Activated B cell treated with CpG ODN at 0.5 μM for 24 hours (primary cell): ENCODE measurements at regions of chr17 and their contacts with region 1.

Region 1: GRCh38 chr17:45317112-45317928 is 500 bp upstream of the MAP3K14 start:
- DNase-seq: peak; percentile 99
- ATAC-seq: peak; percentile 79
- H3K4me3 Mint-ChIP-seq: peak overlapping the region; percentile 90
- H3K27ac Mint-ChIP-seq: peak overlapping the region; percentile 96
- H3K4me1 Mint-ChIP-seq: peaks cover 49% of the 10 kb centered on the region
- H3K27me3 Mint-ChIP-seq: no peaks in the 10 kb centered on the region
- CTCF ChIP-seq: no peak

Region 2: GRCh38 chr17:44988044-44988942 is 329.0 kb before region 1 on chr17:
- CTCF ChIA-PET with region 1: no interaction called
- POLR2A ChIA-PET with region 1: no interaction called
- intact Hi-C with region 1: no loop called
- DNase-seq: no peak
- ATAC-seq: no peak
- H3K4me3 Mint-ChIP-seq: no peak overlapping the region
- H3K27ac Mint-ChIP-seq: no peak overlapping the region
- H3K4me1 Mint-ChIP-seq: peaks cover 9% of the 10 kb centered on the region
- H3K27me3 Mint-ChIP-seq: peaks cover 48% of the 10 kb centered on the region
- CTCF ChIP-seq: no peak

Region 3: DNA sequence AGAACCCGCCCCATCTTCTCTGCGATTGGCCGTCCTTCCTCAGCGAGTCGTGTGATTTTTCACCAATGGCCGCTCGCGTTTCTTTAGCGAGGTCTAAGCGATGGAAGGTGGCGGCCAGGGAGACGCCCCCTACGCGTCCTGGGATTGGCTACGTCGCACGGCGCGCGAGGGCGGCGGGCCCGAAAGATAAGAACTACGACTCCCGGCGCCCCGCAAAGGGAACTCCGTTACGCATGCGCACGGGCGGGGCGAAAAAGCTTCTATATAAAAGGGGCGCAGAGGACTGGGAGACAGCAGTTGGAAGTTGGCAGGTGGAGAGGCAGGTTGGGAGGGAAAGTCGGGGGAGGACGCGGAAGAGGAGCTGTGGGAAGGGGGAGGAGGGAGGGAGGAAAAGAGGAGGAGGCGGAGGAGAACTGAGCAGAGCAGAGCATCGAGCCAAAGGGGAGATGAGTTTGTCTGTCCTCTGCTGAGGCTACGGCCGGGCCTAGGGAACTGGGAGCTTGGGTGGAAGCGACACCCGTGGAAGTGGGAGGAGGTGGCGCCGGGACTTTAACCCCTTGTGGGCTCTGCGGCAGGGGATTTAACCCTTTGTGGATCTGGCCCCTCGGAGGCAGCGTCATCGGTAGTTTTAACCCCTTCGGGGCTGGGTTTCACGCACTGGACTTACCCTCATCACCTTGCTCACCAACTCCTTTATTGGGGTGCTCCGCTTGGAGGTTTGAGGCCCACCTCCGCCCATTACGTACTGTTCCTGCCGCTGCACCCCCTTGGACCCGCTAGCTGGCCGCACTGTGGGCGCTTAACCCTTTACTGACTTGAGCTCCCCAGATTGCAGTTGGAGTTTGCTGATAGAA is 168.9 kb before region 1 on chr17 and contains the start of gene HEXIM1:
- CTCF ChIA-PET with region 1: interaction called, 3 read pairs
- POLR2A ChIA-PET with region 1: interaction called, 19 read pairs
- intact Hi-C with region 1: loop called (anchors 2 kb)
- DNase-seq: peak; percentile 97
- ATAC-seq: peak; percentile 74
- H3K4me3 Mint-ChIP-seq: peak within 1 kb of the TSS; percentile 96
- H3K27ac Mint-ChIP-seq: peak within 1 kb of the TSS; percentile 100
- H3K4me1 Mint-ChIP-seq: peaks cover 61% of the 10 kb centered on the region
- H3K27me3 Mint-ChIP-seq: no peaks in the 10 kb centered on the region
- CTCF ChIP-seq: no peak
- total RNA-seq, gene HEXIM1: 19.5 and 21.5 TPM in 2 replicates

Region 4: GRCh38 chr17:45228763-45229539 is 88.4 kb before region 1 on chr17:
- CTCF ChIA-PET with region 1: interaction called, 8 read pairs
- POLR2A ChIA-PET with region 1: interaction called, 154 read pairs
- intact Hi-C with region 1: loop called (anchors 1 kb)
- DNase-seq: peak; percentile 84
- ATAC-seq: peak; percentile 45
- H3K4me3 Mint-ChIP-seq: peak overlapping the region; percentile 79
- H3K27ac Mint-ChIP-seq: peak overlapping the region; percentile 99
- H3K4me1 Mint-ChIP-seq: peaks cover 97% of the 10 kb centered on the region
- H3K27me3 Mint-ChIP-seq: no peaks in the 10 kb centered on the region
- CTCF ChIP-seq: no peak

Region 5: GRCh38 chr17:45284176-45285140 is 32.9 kb before region 1 on chr17:
- CTCF ChIA-PET with region 1: interaction called, 34 read pairs
- POLR2A ChIA-PET with region 1: interaction called, 291 read pairs
- intact Hi-C with region 1: loop called (anchors 1 kb)
- DNase-seq: no peak
- ATAC-seq: peak; percentile 75
- H3K4me3 Mint-ChIP-seq: no peak overlapping the region
- H3K27ac Mint-ChIP-seq: peak overlapping the region; percentile 19
- H3K4me1 Mint-ChIP-seq: peaks cover 4% of the 10 kb centered on the region
- H3K27me3 Mint-ChIP-seq: no peaks in the 10 kb centered on the region
- CTCF ChIP-seq: no peak

Region 6: DNA sequence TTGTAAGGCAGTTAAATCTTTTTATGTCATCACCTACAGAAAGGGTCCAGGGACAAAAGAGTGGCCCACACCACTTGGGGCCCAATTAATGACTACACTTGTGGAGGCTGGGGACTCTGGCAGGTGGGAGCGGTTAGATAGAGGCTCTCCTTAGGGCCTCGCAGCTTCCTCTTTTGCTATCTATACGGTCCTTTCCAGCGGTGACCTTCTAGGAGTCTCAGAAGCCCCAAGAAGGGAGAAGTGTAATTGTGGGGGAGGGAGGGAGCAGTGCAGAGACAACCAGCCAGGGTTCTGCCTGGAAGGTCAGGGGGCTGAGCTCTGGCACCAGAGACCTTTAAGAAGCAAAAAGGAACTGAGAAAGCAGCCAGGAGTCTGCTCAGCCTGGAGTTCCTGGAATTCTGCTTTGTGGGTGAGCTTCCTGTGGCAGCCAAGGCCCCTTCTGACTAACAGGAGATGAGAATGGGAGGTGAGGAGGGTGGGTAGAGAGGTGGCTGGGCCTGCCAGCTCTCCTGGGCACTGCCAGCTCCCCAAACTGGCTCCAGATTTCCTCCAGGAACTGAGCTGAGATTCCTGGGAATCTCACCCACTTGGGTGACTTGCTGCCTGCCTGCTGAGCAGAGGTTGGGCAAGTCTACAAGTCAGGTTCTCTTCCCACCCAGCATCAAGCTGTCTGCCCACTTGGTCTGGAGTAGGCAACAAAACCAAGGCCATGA is 15.8 kb after region 1 on chr17:
- CTCF ChIA-PET with region 1: interaction called, 3 read pairs
- POLR2A ChIA-PET with region 1: interaction called, 46 read pairs
- intact Hi-C with region 1: loop called (anchors 1 kb)
- DNase-seq: no peak
- ATAC-seq: peak; percentile 77
- H3K4me3 Mint-ChIP-seq: peak overlapping the region; percentile 46
- H3K27ac Mint-ChIP-seq: peak overlapping the region; percentile 69
- H3K4me1 Mint-ChIP-seq: peaks cover 43% of the 10 kb centered on the region
- H3K27me3 Mint-ChIP-seq: no peaks in the 10 kb centered on the region
- CTCF ChIP-seq: no peak

Region 7: DNA sequence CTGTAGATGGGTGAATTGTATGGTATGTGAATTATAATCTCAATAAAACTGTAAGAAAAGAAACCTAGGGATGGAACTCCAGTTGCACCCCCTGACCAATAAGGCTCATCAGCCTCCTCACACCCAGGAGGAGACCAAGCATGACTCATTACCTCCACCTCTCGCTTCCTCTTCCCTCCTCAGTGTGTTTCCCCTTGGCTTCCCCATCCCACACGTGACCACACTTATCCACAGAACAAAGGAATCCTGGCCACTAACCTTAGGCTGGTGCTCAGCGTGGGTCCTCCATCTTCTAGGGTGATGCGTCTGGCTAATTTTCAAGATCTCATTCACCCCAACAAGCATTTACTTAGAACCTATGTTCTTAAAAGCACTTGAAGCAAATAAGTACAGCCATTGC is 35.7 kb after region 1 on chr17:
- CTCF ChIA-PET with region 1: no interaction called
- POLR2A ChIA-PET with region 1: interaction called, 13 read pairs
- intact Hi-C with region 1: loop called (anchors 5 kb)
- DNase-seq: no peak
- ATAC-seq: peak; percentile 88
- H3K4me3 Mint-ChIP-seq: peak overlapping the region; percentile 62
- H3K27ac Mint-ChIP-seq: peak overlapping the region; percentile 79
- H3K4me1 Mint-ChIP-seq: peaks cover 29% of the 10 kb centered on the region
- H3K27me3 Mint-ChIP-seq: no peaks in the 10 kb centered on the region
- CTCF ChIP-seq: no peak